ENCODE measurements at regions of chr11 and their contacts with region 1.

Region 1: DNA sequence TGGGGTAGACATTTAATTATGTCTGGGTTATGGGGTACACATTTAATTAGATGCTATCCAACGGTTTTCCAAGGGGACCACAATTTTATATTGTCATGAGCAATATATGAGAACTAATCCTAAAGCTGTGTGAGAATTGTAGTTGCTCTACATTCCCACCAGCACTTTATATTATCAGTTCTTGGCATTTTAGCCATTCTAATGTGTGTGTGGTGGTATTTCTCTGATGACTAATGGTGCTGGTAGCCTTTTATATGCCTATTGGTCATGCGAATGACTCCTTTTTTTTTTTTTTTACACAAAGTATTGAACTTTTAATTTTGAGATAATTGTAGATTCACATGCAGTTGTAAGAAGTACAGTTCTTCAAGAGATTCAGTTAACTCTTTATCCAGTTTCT is 26.2 kb downstream of the TMEM135 start:
- DNase-seq: no peak

Region 2: GRCh38 chr11:85875142-85875922 is 1188.7 kb before region 1 on chr11:
- intact Hi-C with region 1: loop called in 1 of 2 experiments (anchors 5 kb)
- DNase-seq: no peak

Region 3: GRCh38 chr11:87022254-87022653 is 41.7 kb before region 1 on chr11:
- intact Hi-C with region 1: no loop called
- DNase-seq: no peak

Measured in posterior vena cava (tissue), 2 donors.